ENCODE measurements at regions of chr22 and their contacts with region 1.

Region 1: GRCh38 chr22:44735540-44736488 is 16.6 kb upstream of the ARHGAP8 start:
- DNase-seq: peak; percentile 36 to 95 (median 80)

Region 2: GRCh38 chr22:44697423-44698141 is 38.2 kb before region 1 on chr22:
- intact Hi-C with region 1: loop called (anchors 1 kb)
- DNase-seq: peak; percentile 29 to 95 (median 71)